Transverse colon (tissue), 4 donors: ENCODE measurements at regions of chr11 and their contacts with region 1.

Region 1: GRCh38 chr11:78838417-78838816 is 263.8 kb upstream of the NARS2 start:
- DNase-seq: no peak
- H3K4me3 ChIP-seq: no peak overlapping the region
- H3K27ac ChIP-seq: no peak overlapping the region
- H3K4me1 ChIP-seq: peaks cover 0 to 6% (median 0%) of the 10 kb centered on the region in 4 donors
- H3K27me3 ChIP-seq: no peaks in the 10 kb centered on the region
- CTCF ChIP-seq: no peak
- EP300 ChIP-seq: no peak
- POLR2A ChIP-seq: no peak

Region 2: DNA sequence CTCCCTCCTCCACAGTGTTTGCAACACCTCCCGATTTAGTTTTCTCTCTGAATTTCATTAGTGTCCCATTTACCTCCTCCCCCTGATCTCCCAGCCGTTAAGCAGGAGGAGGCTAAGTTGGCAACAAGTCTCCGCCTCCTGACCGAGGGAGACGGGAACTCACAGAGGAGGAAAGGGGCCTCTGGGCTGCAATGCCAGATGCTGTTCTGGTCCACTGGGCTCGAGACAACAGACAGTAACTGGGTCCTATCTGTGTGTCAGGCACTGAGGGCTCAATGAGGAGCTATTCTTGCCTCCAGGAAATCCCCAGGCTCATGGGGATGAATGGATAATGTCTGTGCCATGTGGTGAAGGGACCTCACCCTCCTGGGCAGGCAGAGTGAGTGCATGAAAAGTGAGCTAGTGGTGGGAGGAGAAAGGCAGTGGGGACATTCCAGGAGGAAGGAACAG is 374.3 kb after region 1 on chr11:
- in situ Hi-C with region 1: no loop called
- intact Hi-C with region 1: no loop called
- DNase-seq: no peak
- H3K4me3 ChIP-seq: no peak overlapping the region
- H3K27ac ChIP-seq: no peak overlapping the region
- H3K4me1 ChIP-seq: no peaks in the 10 kb centered on the region
- H3K27me3 ChIP-seq: no peaks in the 10 kb centered on the region
- CTCF ChIP-seq: no peak
- EP300 ChIP-seq: no peak
- POLR2A ChIP-seq: no peak

Region 3: DNA sequence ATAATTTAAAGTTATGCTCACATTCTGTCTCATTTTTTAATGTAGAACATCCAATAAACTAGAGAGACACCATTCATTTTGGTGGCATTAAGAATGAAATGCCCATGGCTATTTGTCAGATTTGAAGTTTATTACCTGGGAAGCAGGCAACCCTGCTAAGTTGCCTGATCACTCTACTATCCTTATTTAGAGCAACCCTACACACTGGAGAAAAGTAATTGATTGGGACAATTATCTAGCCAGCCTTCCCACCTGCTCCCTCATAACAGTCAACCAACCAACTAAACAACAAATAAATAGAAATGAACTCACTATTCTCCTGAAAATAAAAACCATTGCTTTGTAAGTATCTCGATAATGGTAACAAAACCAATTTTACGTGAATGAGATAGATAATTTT is 1731.4 kb after region 1 on chr11:
- in situ Hi-C with region 1: no loop called
- intact Hi-C with region 1: loop called (anchors 5 kb)
- DNase-seq: no peak
- H3K4me3 ChIP-seq: no peak overlapping the region
- H3K27ac ChIP-seq: no peak overlapping the region
- H3K4me1 ChIP-seq: no peaks in the 10 kb centered on the region
- H3K27me3 ChIP-seq: no peaks in the 10 kb centered on the region
- CTCF ChIP-seq: no peak
- EP300 ChIP-seq: no peak
- POLR2A ChIP-seq: no peak